ENCODE measurements at regions of chr2 and their contacts with region 1.

Region 1: DNA sequence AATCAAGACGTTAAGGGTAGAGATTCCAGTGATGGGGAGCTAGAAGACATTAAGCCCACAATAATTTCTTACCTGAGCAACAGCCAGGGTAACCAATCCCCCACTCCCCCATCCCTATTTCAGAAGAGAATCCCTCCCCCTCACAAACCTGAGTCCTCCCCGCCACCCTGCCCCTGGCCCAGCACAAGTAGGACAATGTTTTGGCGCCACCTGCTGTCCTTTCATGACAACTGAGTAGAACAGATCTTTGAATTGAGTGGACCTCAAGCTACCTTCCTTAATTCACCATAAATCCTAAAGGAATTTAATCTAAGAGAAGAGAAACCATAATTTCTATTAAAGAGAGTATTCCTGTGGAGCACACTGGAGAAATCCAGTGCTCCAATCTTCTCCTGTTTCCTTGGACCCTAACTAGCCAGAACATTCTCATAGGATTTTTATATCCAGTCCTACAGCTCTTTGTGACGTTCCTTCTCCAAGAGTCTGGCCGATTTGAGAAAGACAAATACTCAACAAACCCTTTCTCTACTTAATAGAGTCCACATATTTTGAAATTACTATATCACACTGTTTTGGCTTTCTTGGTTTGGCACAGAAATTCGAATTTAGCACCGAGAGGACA is 41.1 kb downstream of the NHEJ1 start:
- H3K4me3 ChIP-seq: no peak overlapping the region
- H3K27ac ChIP-seq: no peak overlapping the region
- H3K4me1 ChIP-seq: peaks cover 27% of the 10 kb centered on the region
- CTCF ChIP-seq: peak; percentile 63

Region 2: GRCh38 chr2:218979846-218980734 is 139.4 kb before region 1 on chr2:
- CTCF ChIA-PET with region 1: interaction called, 15 read pairs
- POLR2A ChIA-PET with region 1: no interaction called
- H3K4me3 ChIP-seq: peak overlapping the region; percentile 42
- H3K27ac ChIP-seq: no peak overlapping the region; the same call in 1 of the 2 replicates
- H3K4me1 ChIP-seq: 0 out of 2 replicates have a peak, but pooled peaks cover 2% of the 10 kb centered on the region
- CTCF ChIP-seq: peak; percentile 99

Region 3: DNA sequence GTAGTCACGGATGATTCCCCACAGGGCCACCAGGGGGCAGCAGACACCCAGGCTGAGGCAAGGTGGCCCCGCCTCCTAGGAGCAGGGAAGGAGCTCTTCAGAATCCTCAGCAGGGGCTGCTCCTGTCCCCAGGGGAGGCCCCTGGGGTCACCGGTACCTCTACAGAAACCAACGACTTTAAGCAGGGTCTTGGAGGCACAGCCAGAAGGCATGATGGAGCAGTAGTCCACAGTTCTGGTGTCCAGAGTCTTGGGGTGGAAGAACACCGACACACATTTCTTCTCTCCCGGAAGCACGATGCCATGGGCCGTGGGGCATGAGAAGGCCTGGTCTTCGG is 89.7 kb before region 1 on chr2:
- CTCF ChIA-PET with region 1: interaction called, 45 read pairs
- POLR2A ChIA-PET with region 1: no interaction called
- H3K4me3 ChIP-seq: no peak overlapping the region
- H3K27ac ChIP-seq: no peak overlapping the region
- H3K4me1 ChIP-seq: no peaks in the 10 kb centered on the region
- CTCF ChIP-seq: peak; percentile 93

Region 4: GRCh38 chr2:219057709-219058540 is 61.6 kb before region 1 on chr2:
- CTCF ChIA-PET with region 1: interaction called, 39 read pairs
- POLR2A ChIA-PET with region 1: no interaction called
- H3K4me3 ChIP-seq: no peak overlapping the region
- H3K27ac ChIP-seq: no peak overlapping the region
- H3K4me1 ChIP-seq: no peaks in the 10 kb centered on the region; the same call in 1 of the 2 replicates
- CTCF ChIP-seq: peak; percentile 93

Region 5: DNA sequence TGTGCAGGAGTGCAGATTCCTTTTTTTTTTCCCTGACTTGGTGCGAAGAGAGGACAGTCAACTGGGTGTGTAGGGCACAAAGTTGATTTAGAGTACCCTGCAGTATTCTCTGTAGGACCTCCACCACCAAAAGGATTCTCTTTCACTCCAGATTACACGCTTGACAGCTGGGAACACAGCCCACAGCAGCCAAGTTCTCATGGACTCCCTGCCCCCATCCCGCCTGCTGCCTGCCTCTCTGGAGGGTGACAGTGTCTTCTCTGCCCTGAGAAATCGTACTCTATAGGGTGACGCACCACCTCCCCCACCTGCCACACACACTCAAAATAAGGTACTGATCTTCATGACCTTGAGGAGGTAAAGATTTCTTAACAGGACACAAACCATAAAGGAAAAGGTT is 32.2 kb before region 1 on chr2:
- CTCF ChIA-PET with region 1: interaction called, 11 read pairs
- POLR2A ChIA-PET with region 1: no interaction called
- H3K4me3 ChIP-seq: no peak overlapping the region
- H3K27ac ChIP-seq: no peak overlapping the region
- H3K4me1 ChIP-seq: no peaks in the 10 kb centered on the region
- CTCF ChIP-seq: no peak

Region 6: DNA sequence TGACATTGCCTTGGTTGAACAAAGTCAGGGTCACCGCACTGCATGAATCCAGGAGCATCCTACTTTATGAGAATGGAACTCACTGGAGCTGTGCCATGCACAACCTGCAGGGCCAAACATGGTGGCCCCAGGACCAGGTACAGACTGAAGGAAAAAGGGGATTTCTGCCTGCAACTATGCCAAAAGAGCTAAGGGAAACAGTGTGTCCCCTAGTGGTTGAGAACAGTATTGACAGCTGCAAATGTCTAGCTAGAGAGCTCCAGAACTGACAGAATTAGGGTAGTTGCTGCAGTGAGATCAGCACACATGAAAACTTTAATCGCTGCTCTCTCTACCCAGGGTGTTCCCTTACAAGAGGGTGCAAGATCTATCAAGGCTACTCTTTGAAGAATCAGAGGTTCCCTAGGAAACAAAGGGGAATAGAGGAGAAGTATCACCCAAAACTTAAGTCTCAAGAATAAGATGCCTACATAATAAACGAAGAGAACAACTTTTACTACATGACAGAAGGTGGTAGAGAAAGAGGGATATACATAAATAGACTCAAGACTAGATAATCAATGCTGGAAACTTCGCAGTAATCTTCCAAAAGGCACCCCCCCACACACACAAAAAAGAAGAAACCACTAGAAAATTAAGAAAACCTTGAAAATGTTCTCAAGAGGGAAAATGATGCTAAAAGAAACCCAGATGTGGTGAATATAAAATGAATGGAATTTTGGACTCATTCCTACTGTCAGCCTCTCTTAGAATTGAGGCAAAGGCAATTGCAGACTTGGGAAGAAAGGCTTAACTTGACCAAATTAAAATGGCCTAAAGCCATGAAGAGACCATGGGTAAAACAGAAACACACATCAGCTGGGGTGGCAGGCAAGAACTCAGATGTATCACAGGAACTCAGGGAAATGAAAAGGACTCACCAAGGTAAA is 15.2 kb before region 1 on chr2:
- CTCF ChIA-PET with region 1: interaction called, 38 read pairs
- POLR2A ChIA-PET with region 1: no interaction called
- H3K4me3 ChIP-seq: no peak overlapping the region
- H3K27ac ChIP-seq: no peak overlapping the region
- H3K4me1 ChIP-seq: no peaks in the 10 kb centered on the region
- CTCF ChIP-seq: peak; percentile 31

Region 7: GRCh38 chr2:219142329-219142728 is 22.8 kb after region 1 on chr2:
- CTCF ChIA-PET with region 1: interaction called, 10 read pairs
- POLR2A ChIA-PET with region 1: no interaction called
- H3K4me3 ChIP-seq: no peak overlapping the region
- H3K27ac ChIP-seq: no peak overlapping the region
- H3K4me1 ChIP-seq: 0 out of 2 replicates have a peak, but pooled peaks cover 2% of the 10 kb centered on the region
- CTCF ChIP-seq: no peak